ENCODE measurements at regions of chr14 and their contacts with region 1.

Region 1: GRCh38 chr14:73825551-73826188 is 26.0 kb upstream of the PTGR2 start:
- DNase-seq: peak; percentile 96
- ATAC-seq: peak; percentile 96

Region 2: DNA sequence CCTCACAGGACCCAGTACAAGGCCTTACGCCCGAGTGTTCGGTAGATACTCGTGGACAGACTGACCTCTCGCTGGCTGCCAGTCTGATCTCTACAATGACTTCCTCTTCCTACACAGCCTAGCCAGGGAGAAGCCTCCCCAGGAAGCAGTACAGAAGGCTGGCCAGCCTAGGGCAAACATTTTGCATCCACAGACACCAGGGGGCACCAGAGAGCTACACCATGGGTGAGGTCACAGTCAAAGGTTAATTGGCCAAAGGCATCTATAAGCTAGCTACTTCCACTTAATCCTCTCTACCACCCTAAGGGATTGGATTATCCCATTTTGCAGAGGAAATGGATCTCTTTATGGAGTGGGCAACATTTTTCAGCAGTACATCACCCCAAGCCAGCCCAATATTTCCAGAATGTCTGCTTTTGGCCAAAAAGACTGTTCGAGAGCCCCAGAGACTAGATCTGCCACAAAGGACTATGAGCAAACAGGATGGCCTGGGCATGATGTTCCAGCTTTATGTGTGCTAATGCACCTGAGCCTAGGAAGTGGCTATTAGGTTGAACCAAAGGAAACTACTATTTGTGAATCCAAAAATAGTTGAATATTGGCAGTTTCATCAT is 96.8 kb before region 1 on chr14:
- intact Hi-C with region 1: loop called (anchors 5 kb)
- DNase-seq: peak; percentile 87
- ATAC-seq: peak; percentile 63

Region 3: GRCh38 chr14:73997108-73997943 is 171.7 kb after region 1 on chr14:
- intact Hi-C with region 1: no loop called
- DNase-seq: no peak
- ATAC-seq: no peak

Measured in left ventricle myocardium superior (tissue), 1 donor.